Right ventricle myocardium superior (tissue), 1 donor: ENCODE measurements at regions of chr9 and their contacts with region 1.

Region 1: DNA sequence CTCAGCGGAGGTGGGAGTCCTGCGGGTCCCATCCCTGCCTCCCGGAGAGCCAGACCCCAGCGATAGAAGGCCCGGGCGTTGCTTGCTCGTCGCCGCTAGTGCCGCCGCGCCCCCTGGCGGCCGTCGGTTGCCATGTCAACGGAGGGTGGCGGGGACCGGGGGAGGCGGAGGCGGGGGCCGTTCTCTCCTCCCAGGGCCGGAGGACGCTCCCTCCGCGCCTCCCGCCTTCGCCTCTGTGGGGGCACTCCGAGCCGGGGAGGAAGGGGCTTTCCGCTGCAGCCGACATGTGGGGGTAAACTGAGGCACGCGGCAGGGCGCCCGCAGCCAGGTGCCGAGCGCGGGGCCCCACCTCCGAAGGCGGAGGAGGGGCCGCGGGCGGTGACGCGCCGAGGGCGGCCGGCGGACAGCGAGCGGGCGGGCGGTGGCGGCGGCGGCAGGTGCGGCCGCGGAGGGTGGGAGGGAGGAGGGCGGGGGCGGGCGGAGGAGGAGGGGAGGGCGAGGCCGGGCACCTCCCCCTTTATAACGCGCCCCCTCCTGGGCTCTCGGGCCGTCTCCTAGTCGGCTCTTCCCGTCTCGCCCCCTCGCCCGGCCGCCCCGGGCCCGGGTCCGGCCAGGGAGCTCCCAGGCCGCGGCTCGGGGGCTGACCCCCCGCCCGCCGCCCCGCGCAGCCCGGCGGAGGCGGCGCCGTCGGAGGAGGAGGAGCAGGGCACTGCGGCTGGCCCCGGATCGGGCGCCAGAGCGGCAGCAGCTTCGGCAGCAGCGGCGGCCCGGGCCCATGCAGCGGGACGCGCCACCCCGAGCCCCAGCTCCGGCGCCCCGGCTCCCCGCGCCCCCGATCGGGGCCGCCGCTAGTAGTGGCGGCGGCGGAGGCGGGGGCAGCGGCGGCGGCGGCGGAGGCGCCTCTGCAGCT is 556 bp upstream of the CDK9 start:
- DNase-seq: peak; percentile 93
- ATAC-seq: peak; percentile 76

Region 2: GRCh38 chr9:127869310-127870152 is 84.3 kb after region 1 on chr9:
- intact Hi-C with region 1: loop called (anchors 5 kb)
- DNase-seq: peak; percentile 93
- ATAC-seq: peak; percentile 76